GM12878 (cell line): ENCODE measurements at regions of chr6 and their contacts with region 1.

Region 1: DNA sequence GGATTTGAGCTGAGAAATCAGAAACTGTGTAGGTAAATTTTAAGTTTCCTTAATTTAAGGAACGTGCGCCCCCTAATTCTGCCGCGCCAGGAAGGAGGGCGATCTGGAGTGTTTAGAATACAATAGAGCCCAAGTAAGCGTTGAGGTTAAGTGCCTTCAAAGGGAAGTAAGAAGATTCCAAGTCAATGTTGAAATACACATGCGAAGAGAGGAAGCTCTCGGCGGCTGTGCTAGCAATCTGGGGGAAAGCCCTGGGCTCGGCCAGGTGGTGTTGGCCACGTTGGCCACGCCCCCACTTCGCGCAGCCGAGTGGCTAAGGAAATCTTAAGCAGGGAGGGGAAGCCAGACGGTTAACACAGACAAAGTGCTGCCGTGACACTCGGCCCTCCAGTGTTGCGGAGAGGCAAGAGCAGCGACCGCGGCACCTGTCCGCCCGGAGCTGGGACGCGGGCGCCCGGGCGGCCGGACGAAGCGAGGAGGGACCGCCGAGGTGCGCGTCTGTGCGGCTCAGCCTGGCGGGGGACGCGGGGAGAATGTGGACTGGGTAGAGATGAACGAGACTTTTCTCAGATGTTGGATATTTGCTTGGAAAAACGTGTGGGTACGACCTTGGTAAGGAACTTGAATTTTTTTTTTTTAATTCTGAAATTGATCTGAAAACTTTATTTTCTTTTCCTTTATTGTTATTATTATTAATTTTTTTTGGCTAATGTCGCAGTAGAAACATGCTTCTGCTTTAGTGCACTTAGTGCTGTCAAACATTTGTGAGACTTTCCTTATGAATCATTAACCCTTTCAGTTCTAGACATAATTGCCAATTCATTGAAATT is at the start of gene PRDM1:
- DNase-seq: peak; percentile 78
- ATAC-seq: peak; percentile 77
- H3K4me3 ChIP-seq: peak within 1 kb of the TSS; percentile 70
- H3K27ac ChIP-seq: peak within 1 kb of the TSS; percentile 78
- H3K4me1 ChIP-seq: peaks cover 23% of the 10 kb centered on the region
- H3K27me3 ChIP-seq: peaks cover 0 to under 1% of the 10 kb centered on the region in 2 experiments; a peak in 2 of 4 replicates
- CTCF ChIP-seq: peak; percentile 35 to 41 (median 41); a peak in 4 of 6 replicates
- EP300 ChIP-seq: no peak
- POLR2A ChIP-seq: peak; percentile 82
- RAD21 ChIP-seq: peak; percentile 38
- polyA plus RNA-seq, gene PRDM1: 1.9 to 2.8 TPM

Region 2: DNA sequence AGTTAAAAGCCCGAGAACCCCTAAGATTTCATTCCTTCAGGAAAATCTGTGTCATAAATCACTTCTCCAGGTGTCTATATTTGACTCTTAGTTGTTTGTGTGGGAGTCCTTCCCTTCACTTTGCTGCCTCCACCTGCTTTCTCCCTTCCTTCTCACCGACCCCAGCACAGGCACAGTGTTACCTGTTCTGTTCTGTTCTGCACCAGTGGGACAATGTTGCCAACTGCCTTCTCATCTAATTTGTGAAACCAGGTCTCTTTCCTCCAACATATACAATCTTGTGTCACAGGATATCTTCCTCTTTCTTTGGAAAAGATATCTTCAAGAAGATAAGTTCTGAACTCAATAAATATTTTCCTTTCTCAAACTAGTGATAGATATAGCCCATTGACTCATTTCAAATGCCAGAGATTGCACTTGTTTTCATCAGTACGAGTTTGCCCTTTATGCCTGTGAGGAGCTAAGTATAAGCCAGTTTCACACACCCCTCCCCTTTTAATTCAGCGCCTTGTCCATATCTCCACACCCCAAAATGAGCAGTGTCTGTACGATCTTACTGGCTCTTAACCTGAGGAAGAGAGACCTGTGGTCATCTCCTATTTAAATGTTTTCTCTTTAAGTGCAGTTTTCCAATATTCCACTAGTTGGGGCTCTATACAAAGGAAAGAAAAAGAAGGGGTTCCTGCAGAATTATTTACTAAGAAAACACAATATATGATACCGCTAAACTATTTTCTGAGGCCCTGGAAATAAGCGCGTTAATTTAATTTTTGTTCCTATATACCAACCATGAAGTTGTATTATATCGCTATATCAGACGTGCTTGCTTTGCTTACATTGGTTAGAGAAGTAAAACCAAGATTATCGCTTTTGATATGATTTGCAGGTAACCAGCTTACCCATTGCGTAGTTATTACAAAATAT is 601.7 kb before region 1 on chr6:
- CTCF ChIA-PET with region 1: interaction called, 24 read pairs
- POLR2A ChIA-PET with region 1: interaction called, 3 read pairs
- RAD21 ChIA-PET with region 1: interaction called, 30 read pairs
- SMC1A ChIA-PET with region 1: interaction called, 43 read pairs
- in situ Hi-C with region 1: no loop called
- intact Hi-C with region 1: loop called (anchors 1 kb)
- DNase-seq: no peak
- ATAC-seq: peak; percentile 64
- H3K4me3 ChIP-seq: no peak overlapping the region
- H3K27ac ChIP-seq: peak overlapping the region; percentile 8; the same call in 1 of the 2 replicates
- H3K4me1 ChIP-seq: peaks cover 50% of the 10 kb centered on the region
- H3K27me3 ChIP-seq: no peaks in the 10 kb centered on the region
- CTCF ChIP-seq: peak; percentile 80 to 84 (median 82)
- EP300 ChIP-seq: peak in 1 of 2 experiments; percentile 50; a peak in 2 of 4 replicates
- POLR2A ChIP-seq: no peak
- RAD21 ChIP-seq: peak; percentile 96

Region 3: GRCh38 chr6:105793130-105793529 is 293.1 kb before region 1 on chr6:
- CTCF ChIA-PET with region 1: interaction called, 3 read pairs
- POLR2A ChIA-PET with region 1: no interaction called
- RAD21 ChIA-PET with region 1: no interaction called
- SMC1A ChIA-PET with region 1: no interaction called
- in situ Hi-C with region 1: no loop called
- intact Hi-C with region 1: loop called (anchors 5 kb)
- DNase-seq: no peak
- ATAC-seq: peak; percentile 46
- H3K4me3 ChIP-seq: no peak overlapping the region
- H3K27ac ChIP-seq: no peak overlapping the region
- H3K4me1 ChIP-seq: peaks cover 33% of the 10 kb centered on the region
- H3K27me3 ChIP-seq: 0 out of 4 replicates have a peak, but pooled peaks cover 0 to 2% of the 10 kb centered on the region in 2 experiments
- CTCF ChIP-seq: peak in 2 of 3 experiments; percentile 4 to 18; a peak in 1 of 6 replicates
- EP300 ChIP-seq: no peak
- POLR2A ChIP-seq: no peak
- RAD21 ChIP-seq: peak; percentile 31; the same call in 1 of the 2 replicates

Region 4: GRCh38 chr6:105804436-105804835 is 281.8 kb before region 1 on chr6:
- CTCF ChIA-PET with region 1: no interaction called
- POLR2A ChIA-PET with region 1: no interaction called
- RAD21 ChIA-PET with region 1: no interaction called
- SMC1A ChIA-PET with region 1: no interaction called
- in situ Hi-C with region 1: no loop called
- intact Hi-C with region 1: no loop called
- DNase-seq: no peak
- ATAC-seq: no peak
- H3K4me3 ChIP-seq: no peak overlapping the region
- H3K27ac ChIP-seq: no peak overlapping the region
- H3K4me1 ChIP-seq: no peaks in the 10 kb centered on the region
- H3K27me3 ChIP-seq: no peaks in the 10 kb centered on the region; a peak in 1 of 4 replicates
- CTCF ChIP-seq: no peak
- EP300 ChIP-seq: no peak
- POLR2A ChIP-seq: no peak
- RAD21 ChIP-seq: no peak

Region 5: GRCh38 chr6:105943514-105943913 is 142.7 kb before region 1 on chr6:
- CTCF ChIA-PET with region 1: no interaction called
- POLR2A ChIA-PET with region 1: no interaction called
- RAD21 ChIA-PET with region 1: no interaction called
- SMC1A ChIA-PET with region 1: no interaction called
- in situ Hi-C with region 1: no loop called
- intact Hi-C with region 1: no loop called
- DNase-seq: no peak
- ATAC-seq: no peak
- H3K4me3 ChIP-seq: no peak overlapping the region
- H3K27ac ChIP-seq: no peak overlapping the region
- H3K4me1 ChIP-seq: no peaks in the 10 kb centered on the region
- H3K27me3 ChIP-seq: no peaks in the 10 kb centered on the region; a peak in 1 of 4 replicates
- CTCF ChIP-seq: no peak
- EP300 ChIP-seq: no peak
- POLR2A ChIP-seq: no peak
- RAD21 ChIP-seq: no peak

Region 6: DNA sequence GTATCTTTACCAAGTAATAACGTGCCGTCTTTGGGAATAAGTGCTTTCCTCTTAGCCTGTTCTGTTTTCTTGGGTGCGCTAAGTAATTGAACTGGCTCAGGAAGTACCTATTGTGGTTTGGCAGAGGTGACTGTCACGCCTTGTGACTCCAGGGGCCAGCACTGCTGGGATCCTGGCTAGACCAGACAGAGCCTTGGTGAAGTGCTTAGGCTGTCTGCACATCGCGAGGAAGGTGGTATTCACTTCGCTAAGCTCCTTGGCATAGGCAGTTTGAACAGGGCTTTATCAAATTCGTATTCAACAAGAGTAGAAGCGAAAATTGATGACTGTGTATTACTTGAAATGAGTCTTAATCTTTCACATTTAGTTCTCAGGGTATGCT is 17.5 kb after region 1 on chr6:
- CTCF ChIA-PET with region 1: interaction called, 13 read pairs
- POLR2A ChIA-PET with region 1: interaction called, 6 read pairs
- RAD21 ChIA-PET with region 1: interaction called, 18 read pairs
- SMC1A ChIA-PET with region 1: interaction called, 42 read pairs
- in situ Hi-C with region 1: no loop called
- intact Hi-C with region 1: no loop called
- DNase-seq: no peak
- ATAC-seq: peak; percentile 56
- H3K4me3 ChIP-seq: 0 out of 2 replicates have a peak overlapping the region, but pooled peaks have one; percentile 6
- H3K27ac ChIP-seq: 0 out of 2 replicates have a peak overlapping the region, but pooled peaks have one; percentile 15
- H3K4me1 ChIP-seq: peaks cover 46% of the 10 kb centered on the region
- H3K27me3 ChIP-seq: no peaks in the 10 kb centered on the region; a peak in 1 of 4 replicates
- CTCF ChIP-seq: no peak
- EP300 ChIP-seq: no peak
- POLR2A ChIP-seq: no peak
- RAD21 ChIP-seq: no peak

Region 7: GRCh38 chr6:106214531-106214930 is 128.3 kb after region 1 on chr6:
- CTCF ChIA-PET with region 1: interaction called, 169 read pairs
- POLR2A ChIA-PET with region 1: no interaction called
- RAD21 ChIA-PET with region 1: interaction called, 144 read pairs
- SMC1A ChIA-PET with region 1: interaction called, 159 read pairs
- in situ Hi-C with region 1: no loop called
- intact Hi-C with region 1: no loop called
- DNase-seq: no peak
- ATAC-seq: no peak
- H3K4me3 ChIP-seq: no peak overlapping the region
- H3K27ac ChIP-seq: no peak overlapping the region
- H3K4me1 ChIP-seq: no peaks in the 10 kb centered on the region
- H3K27me3 ChIP-seq: no peaks in the 10 kb centered on the region
- CTCF ChIP-seq: no peak
- EP300 ChIP-seq: no peak
- POLR2A ChIP-seq: no peak
- RAD21 ChIP-seq: no peak

Region 8: DNA sequence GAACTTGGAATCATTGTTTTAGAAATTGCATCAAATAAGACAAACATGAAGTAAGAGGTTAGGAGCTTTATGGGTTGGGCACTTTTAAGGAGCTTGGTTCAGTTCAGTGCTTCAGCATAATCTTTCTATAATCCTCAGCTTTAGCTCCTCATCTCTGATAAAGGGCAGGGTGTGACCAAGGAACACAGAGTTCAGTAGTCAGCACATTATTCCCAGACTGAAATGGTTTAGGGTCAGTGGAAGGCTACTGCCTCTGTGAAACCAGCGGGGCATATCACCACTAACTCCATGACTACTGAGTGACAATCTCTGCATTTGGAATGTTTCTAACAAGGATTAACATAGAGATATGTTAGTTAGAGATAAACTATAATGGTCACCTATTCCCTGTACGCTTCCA is 311.2 kb after region 1 on chr6:
- CTCF ChIA-PET with region 1: no interaction called
- POLR2A ChIA-PET with region 1: no interaction called
- RAD21 ChIA-PET with region 1: no interaction called
- SMC1A ChIA-PET with region 1: no interaction called
- in situ Hi-C with region 1: no loop called
- intact Hi-C with region 1: no loop called
- DNase-seq: no peak
- ATAC-seq: no peak
- H3K4me3 ChIP-seq: no peak overlapping the region
- H3K27ac ChIP-seq: no peak overlapping the region
- H3K4me1 ChIP-seq: no peaks in the 10 kb centered on the region
- H3K27me3 ChIP-seq: no peaks in the 10 kb centered on the region
- CTCF ChIP-seq: no peak
- EP300 ChIP-seq: no peak
- POLR2A ChIP-seq: no peak
- RAD21 ChIP-seq: no peak

Region 9: GRCh38 chr6:106444777-106445507 is 358.7 kb after region 1 on chr6:
- CTCF ChIA-PET with region 1: interaction called, 11 read pairs
- POLR2A ChIA-PET with region 1: no interaction called
- RAD21 ChIA-PET with region 1: interaction called, 3 read pairs
- SMC1A ChIA-PET with region 1: interaction called, 14 read pairs
- in situ Hi-C with region 1: no loop called
- intact Hi-C with region 1: no loop called
- DNase-seq: peak; percentile 46
- ATAC-seq: peak; percentile 92
- H3K4me3 ChIP-seq: no peak overlapping the region
- H3K27ac ChIP-seq: no peak overlapping the region
- H3K4me1 ChIP-seq: peaks cover 8% of the 10 kb centered on the region
- H3K27me3 ChIP-seq: no peaks in the 10 kb centered on the region; a peak in 1 of 4 replicates
- CTCF ChIP-seq: peak; percentile 60 to 79 (median 78)
- EP300 ChIP-seq: no peak
- POLR2A ChIP-seq: no peak
- RAD21 ChIP-seq: peak; percentile 79